ENCODE measurements at regions of chr17 and their contacts with region 1.

Region 1: DNA sequence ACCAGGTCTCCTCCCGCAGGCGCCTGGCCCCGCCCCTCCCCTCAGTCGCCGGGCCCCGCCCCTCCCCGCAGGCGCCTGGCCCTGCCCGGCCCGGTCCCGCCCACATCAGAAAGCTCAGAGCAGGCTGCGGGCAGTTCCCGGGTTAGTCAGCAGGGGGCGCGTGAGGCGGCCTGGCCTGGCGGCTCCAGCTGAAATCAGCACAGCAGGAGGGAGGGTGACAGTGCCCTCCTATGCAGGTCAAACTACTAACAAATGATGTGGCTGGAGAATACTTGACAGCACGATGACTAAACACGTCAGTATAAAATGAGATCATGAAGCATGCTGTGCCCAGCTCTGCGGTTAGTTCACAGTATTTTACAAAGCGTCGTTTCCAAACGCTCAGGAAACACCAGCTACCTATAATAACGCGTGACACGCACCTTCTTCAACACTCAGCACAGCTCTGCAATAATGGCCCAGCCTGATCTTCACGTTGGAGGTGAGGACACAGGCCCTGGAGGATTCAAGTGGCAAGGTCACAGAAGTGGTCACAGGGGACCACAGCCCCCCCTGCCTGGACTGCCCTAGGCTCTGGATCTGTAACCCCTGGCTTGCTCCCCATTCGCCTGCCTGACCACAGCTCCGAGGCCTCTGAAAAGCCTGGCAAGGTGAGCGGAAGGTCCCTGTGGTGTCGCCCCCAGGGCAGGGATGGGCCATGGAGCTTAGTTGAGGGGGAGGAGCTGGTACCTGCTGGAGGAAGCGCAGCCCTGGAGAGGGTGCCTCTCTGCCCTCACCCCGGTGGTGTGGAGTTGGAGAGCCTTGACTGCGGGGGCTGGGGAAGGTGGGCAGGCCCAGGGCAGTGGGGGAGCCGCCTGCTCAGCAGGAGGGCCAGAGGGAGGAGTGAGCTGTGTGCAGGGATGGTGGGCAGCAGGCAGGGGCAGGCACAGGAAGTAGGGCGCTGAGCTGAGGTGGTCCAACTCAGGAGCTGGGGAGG is 81.2 kb downstream of the KCNJ12 start:
- DNase-seq: peak; percentile 95
- H3K4me3 ChIP-seq: no peak overlapping the region
- H3K27ac ChIP-seq: peak overlapping the region in 1 of 5 donors; percentile 34
- H3K4me1 ChIP-seq: peaks cover 8 to 21% (median 19%) of the 10 kb centered on the region in 4 donors
- H3K27me3 ChIP-seq: peaks cover 0 to 18% (median 0%) of the 10 kb centered on the region in 3 donors
- CTCF ChIP-seq: peak in 5 of 7 experiments; percentile 76 to 100 (median 94)
- EP300 ChIP-seq: no peak
- POLR2A ChIP-seq: no peak

Region 2: DNA sequence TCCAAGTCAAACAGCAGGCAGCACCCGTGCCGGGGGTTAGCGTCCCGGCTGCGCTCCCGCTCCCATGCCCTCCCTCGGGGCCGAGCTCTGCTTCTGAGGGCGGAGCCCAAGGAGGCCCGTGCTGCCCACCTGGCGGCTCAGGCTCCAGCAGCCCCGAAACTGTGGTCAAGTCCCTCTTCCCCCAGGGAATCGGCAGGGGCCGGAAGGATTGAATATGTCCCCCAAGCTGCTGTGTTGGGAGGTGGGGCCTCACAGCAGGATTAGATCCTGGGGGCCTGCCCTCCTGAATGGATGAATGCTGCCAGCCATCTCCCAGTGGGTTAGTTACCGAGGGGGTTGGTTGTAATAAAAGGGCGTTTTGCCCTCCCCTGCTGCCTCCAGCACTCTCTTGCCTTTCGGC is 138.9 kb before region 1 on chr17:
- intact Hi-C with region 1: loop called (anchors 10 kb)
- DNase-seq: no peak
- H3K4me3 ChIP-seq: no peak overlapping the region
- H3K27ac ChIP-seq: no peak overlapping the region
- H3K4me1 ChIP-seq: peaks cover 8 to 26% (median 18%) of the 10 kb centered on the region in 4 donors
- H3K27me3 ChIP-seq: no peaks in the 10 kb centered on the region
- CTCF ChIP-seq: no peak
- EP300 ChIP-seq: no peak
- POLR2A ChIP-seq: no peak

Region 3: DNA sequence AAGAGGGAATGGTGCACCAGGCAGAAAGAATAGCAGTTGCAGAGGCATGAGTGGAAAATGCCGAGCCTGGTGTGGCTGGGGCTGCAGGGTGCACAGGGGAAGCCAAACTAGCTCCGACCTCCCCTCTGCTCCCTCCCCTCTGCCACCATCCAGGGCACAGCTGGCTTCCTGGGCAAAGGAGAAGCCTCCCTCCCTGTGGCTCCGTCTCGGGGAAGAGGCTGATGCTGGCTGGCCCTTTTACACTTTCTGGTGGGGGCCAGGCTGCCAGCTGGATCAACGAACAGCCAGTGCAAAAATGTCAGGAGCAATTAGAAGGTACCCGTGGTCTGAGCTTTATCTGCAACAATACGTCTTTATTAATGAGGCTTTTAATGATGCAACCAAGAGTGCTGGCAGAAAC is 118.3 kb before region 1 on chr17:
- intact Hi-C with region 1: no loop called
- DNase-seq: no peak
- H3K4me3 ChIP-seq: no peak overlapping the region
- H3K27ac ChIP-seq: no peak overlapping the region
- H3K4me1 ChIP-seq: peaks cover 0 to 8% (median 0%) of the 10 kb centered on the region in 4 donors
- H3K27me3 ChIP-seq: no peaks in the 10 kb centered on the region
- CTCF ChIP-seq: no peak
- EP300 ChIP-seq: no peak
- POLR2A ChIP-seq: no peak

Region 4: DNA sequence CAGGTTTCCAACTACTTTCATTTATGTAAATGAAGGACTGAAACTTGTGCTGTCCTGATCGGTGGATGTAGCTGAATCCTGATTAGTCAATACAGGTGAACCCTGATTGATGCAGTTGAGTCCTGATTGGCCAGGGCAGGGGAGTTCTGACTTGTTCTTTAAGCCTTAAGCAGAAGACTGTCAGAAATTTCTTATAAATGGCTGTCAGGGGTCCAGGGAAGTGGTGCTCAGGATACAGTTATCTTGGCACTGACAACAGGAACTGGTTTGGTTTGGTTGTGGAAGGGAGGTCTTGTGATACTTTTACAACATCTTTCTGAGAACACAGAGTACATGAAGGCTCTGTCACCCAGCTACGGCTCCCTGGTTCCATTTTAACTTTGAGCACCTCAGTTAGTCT is 50.9 kb after region 1 on chr17:
- intact Hi-C with region 1: loop called (anchors 5 kb)
- DNase-seq: no peak
- H3K4me3 ChIP-seq: no peak overlapping the region
- H3K27ac ChIP-seq: no peak overlapping the region
- H3K4me1 ChIP-seq: peaks cover 0 to 24% (median 20%) of the 10 kb centered on the region in 4 donors
- H3K27me3 ChIP-seq: peaks cover 0 to 21% (median 0%) of the 10 kb centered on the region in 3 donors
- CTCF ChIP-seq: no peak
- EP300 ChIP-seq: no peak
- POLR2A ChIP-seq: no peak